Dendritic cell treated with granulocyte-macrophage colony-stimulating factor and Interleukin-4, amounts not matched to agents 40 ng/mL and 50 ng/mL, for 4 days (primary cell): ENCODE measurements at regions of chr9 and their contacts with region 1.

Region 1: DNA sequence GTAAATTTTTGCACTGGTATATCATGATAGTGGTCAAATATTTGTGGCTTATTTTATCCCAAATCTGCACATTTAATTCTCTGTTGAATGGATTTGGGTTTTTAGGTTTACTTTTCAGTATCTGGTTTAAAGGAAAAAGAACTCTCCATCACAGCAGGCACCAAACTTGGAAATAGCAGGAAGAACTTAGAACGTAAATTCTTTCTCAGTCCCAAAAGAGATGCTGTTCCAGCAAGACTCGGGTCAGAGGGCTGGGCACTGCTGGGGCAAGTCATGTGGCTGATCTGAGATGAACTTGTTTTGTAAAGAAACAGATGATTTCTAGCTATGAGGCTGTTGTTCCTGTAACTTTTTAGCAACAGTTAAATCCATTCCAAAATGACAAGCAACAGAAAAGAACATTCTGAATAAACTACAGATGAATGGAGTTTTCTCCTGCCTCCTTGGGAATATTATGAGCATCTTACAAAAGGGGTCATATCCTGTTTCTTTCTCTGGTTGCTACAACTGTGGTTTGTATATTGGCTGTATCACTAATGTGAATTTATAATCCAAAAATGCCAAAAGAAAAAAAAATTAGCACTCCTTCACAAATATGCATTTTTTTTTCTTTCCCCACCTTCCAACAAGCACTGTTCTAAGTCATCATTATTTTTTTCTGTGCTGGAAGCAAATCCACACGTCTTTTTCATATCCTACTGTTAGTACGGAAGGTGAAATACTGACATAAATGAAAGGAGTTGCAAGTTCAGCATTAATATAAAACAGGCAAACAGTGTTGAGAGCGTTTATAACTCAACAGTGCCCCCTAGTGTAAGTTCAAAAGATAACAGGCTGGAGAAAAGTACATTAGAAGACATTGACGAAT is 31.1 kb downstream of the OR2K2 start:
- H3K4me3 Mint-ChIP-seq: peak overlapping the region; percentile 30
- H3K27ac Mint-ChIP-seq: peak overlapping the region; percentile 68
- H3K4me1 Mint-ChIP-seq: peaks cover 7% of the 10 kb centered on the region
- H3K27me3 Mint-ChIP-seq: peaks cover 9% of the 10 kb centered on the region

Region 2: DNA sequence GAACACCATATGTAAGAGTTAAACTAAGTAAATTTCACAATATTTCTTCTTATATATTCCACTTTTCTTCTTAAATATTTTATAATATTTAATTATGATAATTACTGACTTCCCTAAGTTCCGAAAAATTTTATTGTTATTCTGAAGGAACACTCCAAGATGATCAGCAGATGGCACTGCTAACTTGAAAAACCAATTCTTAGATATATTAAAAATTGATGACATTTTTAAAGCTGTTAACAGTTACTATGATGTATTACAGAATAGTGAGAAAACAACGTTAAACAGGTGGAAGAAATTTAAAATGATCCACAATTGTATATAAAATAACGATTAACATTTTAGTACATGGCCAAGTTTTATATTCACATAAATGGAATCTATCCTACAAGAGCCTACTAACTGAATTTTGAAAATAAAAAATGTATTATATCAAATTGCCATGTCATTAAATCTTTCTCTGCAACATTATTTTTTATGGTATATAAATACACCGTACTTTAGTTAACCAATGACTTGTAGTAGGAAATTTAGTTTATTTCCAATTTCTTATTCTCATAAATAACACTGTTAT is 660.5 kb before region 1 on chr9:
- intact Hi-C with region 1: loop called (anchors 1 kb)
- H3K4me3 Mint-ChIP-seq: no peak overlapping the region
- H3K27ac Mint-ChIP-seq: no peak overlapping the region
- H3K4me1 Mint-ChIP-seq: no peaks in the 10 kb centered on the region
- H3K27me3 Mint-ChIP-seq: no peaks in the 10 kb centered on the region

Region 3: DNA sequence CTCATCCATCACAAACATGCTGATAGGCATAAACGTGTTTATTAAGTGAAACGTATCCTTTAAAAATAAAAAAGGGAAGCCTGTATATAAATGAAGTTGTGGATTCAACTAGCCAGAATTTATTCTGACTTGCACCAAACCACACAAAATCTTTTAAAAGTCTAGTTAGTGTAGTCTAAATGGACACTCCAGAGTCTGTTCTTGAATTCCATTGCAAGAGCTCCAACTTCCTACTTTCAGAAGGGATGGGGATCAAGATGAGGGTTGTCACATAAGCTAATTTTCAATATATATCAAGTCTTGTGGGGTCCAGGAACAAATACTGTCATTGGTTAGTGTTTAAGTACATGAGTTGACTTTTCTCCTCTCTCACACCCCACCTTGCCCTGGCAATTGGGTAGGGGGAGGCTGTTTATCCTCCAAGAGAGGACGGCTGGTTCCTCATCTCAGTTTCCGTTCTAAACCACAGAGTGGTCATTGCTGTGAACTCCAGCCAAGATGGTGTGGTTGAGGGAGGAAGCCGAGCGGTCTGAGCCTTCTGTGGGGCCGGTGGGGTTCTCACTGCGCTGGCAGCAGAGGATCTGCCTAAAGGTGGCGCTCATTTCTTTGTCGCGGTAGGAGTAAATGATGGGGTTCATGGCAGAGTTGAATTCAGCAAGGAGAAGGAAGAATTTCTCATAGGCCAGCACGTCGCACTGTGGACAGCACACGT is 423.8 kb before region 1 on chr9:
- intact Hi-C with region 1: loop called (anchors 10 kb)
- H3K4me3 Mint-ChIP-seq: no peak overlapping the region
- H3K27ac Mint-ChIP-seq: peak overlapping the region; percentile 52
- H3K4me1 Mint-ChIP-seq: peaks cover 43% of the 10 kb centered on the region
- H3K27me3 Mint-ChIP-seq: peaks cover 17% of the 10 kb centered on the region

Region 4: GRCh38 chr9:111178331-111179055 is 120.5 kb before region 1 on chr9:
- intact Hi-C with region 1: loop called (anchors 10 kb)
- H3K4me3 Mint-ChIP-seq: no peak overlapping the region
- H3K27ac Mint-ChIP-seq: no peak overlapping the region
- H3K4me1 Mint-ChIP-seq: peaks cover 22% of the 10 kb centered on the region
- H3K27me3 Mint-ChIP-seq: peaks cover 3% of the 10 kb centered on the region